Pancreas (tissue), 10 donors: ENCODE measurements at regions of chr2 and their contacts with region 1.

Region 1: GRCh38 chr2:164757924-164758695 is 83.5 kb downstream of the COBLL1 start:
- DNase-seq: no peak
- ATAC-seq: peak; percentile 19 to 77 (median 64)
- H3K4me3 ChIP-seq: no peak overlapping the region
- H3K27ac ChIP-seq: peak overlapping the region in 2 of 4 donors; percentile 60 to 62
- H3K4me1 ChIP-seq: peaks cover 33 to 42% (median 34%) of the 10 kb centered on the region in 3 donors
- H3K27me3 ChIP-seq: no peaks in the 10 kb centered on the region
- CTCF ChIP-seq: no peak

Region 2: DNA sequence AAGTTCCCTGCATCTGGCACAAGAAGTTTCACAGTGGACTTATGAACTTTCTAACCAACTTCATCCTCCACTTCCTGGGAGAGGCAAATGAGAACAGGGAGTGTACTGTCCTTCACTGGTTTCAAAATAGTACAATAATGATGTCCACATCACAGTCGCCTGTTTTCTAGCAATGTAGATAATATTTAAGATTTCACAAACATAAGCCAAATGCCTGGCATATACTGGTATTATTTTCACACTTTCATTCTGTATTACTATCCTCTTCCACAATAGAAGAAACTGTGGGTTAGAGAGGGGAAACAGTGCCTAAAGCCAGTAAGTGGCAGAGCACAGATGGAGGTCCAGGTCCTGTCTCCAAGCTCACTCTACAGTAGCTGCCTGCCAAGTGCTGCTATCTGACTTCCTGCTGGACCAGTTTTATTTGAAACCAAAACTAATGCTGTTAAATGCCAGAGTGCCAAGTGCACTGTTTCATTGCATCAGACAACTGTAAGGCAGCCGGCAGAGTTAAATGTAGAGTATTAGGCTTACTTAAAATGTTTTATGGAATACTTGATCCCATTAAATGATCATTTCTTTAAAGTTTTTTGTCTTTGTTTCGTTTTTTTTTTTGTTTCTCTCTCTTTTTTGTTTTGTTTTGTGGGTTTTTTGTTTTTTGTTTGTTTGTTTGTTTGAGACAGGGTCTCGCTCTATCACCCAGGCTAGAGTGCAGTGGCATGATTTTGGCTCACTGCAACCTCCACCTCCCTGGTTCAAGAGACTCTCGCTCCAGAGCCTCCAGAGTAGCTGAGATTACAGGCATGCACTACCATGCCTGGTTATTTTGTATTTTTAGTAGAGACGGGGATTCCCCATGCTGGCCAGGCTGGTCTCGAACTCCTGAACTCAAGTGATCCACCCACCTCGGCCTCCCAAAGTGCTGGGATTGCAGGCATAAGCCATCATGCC is 68.5 kb after region 1 on chr2:
- intact Hi-C with region 1: loop called in 1 of 3 experiments (anchors 10 kb)
- DNase-seq: peak in 4 of 6 donors; percentile 55 to 79 (median 76)
- ATAC-seq: peak; percentile 97 to 99 (median 98)
- H3K4me3 ChIP-seq: no peak overlapping the region
- H3K27ac ChIP-seq: peak overlapping the region in 2 of 4 donors; percentile 35 to 66
- H3K4me1 ChIP-seq: peaks cover 12 to 37% (median 31%) of the 10 kb centered on the region in 3 donors
- H3K27me3 ChIP-seq: no peaks in the 10 kb centered on the region
- CTCF ChIP-seq: no peak